Common myeloid progenitor, CD34-positive (primary cell): ENCODE measurements at regions of chr5 and their contacts with region 1.

Region 1: DNA sequence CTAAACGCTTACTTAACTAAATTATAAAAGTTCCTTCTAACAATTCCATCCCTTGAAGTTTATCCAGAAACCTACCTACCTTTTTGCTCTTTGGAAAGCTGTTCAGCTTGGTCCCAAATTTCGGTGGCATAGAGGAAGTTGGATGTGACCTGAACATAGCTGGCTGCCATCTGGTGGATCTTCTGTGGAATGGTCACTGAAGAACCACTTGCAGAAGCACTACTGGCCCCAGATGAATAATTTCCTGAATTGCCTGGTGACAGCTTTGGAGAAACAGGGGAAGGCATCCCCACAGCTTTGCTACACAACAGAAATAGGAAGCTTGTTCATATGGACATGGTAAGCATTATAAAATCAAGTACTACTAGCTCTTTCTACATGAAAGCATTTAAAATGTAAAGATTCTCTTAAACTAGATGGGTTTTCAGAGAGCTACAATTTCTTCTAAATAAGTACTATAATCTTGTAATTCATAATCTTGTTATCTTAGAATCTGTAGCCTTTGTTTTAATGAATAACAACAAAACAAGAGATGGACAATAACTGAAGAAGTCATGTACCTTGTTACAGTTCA is 9.9 kb downstream of the LEAP2 start:
- DNase-seq: peak; percentile 72 to 84 (median 83)
- H3K4me3 ChIP-seq: no peak overlapping the region
- H3K27ac ChIP-seq: no peak overlapping the region
- H3K4me1 ChIP-seq: peaks cover 0 to 3% (median 1%) of the 10 kb centered on the region in 4 experiments
- H3K27me3 ChIP-seq: no peaks in the 10 kb centered on the region

Region 2: DNA sequence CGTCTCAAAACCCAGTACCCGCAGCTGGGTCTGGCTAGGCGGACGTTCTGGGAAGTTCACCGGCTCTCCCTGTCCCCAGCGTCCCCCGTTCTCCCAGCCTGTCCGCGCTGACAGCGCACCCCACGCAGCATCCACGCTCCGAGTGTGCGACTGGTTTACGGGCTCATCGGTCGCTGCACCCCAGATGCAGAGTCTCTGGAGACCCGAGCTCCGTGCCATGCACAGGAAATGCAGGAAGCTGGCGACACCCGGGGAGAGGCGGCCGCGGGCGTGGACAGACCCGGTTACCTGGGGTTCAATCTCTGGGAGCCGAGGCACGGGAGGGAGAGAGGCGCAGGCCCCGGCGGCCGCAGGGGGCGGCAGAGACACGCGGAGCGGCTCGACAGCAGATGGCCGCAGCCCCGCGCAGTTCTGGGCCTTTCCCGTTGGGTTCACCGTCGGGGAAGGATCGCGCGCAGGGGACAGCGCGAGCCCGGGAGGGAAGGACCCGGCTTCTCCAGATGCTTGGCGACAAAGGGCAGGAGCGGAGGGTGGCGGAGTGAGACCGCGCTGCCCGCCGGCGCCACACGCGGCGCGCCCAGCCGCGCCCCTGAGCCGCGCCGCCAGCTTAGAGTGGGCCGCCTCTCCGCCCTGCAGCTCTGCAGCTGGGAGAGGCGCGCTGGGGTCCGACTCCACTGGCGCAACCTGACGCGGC is 53.5 kb before region 1 on chr5:
- CTCF ChIA-PET with region 1: interaction called, 86 read pairs
- POLR2A ChIA-PET with region 1: no interaction called
- DNase-seq: peak; percentile 60 to 78 (median 72)
- H3K4me3 ChIP-seq: peak overlapping the region; percentile 33 to 80 (median 71)
- H3K27ac ChIP-seq: no peak overlapping the region
- H3K4me1 ChIP-seq: peaks cover 0 to 27% (median 22%) of the 10 kb centered on the region in 4 experiments
- H3K27me3 ChIP-seq: peaks cover 0 to 61% (median 39%) of the 10 kb centered on the region in 5 experiments

Region 3: DNA sequence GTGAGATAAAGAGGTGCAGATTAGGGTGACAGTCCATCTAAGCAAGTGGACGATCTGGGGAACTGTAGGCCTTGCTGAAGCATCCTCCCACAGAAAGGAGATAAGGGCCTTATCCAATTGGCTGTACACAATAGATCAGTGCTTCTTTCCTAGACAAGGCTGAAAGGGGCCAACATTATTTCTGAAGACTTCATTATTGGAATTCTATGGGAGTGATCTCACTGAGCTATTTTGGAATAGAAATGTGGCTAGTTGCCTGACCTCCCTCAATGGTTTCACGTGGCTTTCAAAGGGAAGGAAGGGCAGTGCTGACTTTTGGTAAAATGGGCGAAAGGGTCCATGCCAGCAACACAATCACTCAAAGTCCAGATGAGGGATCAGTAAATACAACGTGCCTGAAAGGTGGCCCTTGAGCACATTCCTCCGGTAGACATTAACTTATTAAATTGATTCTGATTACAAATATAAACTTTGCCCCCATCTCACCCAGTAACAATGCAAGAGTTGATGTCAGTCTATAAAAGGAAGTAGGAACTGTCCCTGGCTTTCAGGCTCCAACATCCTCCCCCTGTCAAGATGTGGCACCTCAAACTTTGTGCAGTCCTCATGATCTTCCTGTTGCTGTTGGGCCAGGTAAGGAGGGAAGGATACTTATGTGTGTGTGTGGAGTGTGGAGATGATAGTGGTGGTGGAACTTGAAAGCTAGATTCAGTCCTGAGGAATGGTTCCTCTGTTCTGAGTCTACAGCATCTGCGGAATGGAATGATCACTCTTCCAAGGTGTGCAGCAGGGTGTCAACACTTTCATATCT is 10.0 kb before region 1 on chr5 and contains the start of gene LEAP2:
- CTCF ChIA-PET with region 1: interaction called, 31 read pairs
- POLR2A ChIA-PET with region 1: no interaction called
- DNase-seq: no peak
- H3K4me3 ChIP-seq: no peak within 1 kb of the TSS
- H3K27ac ChIP-seq: no peak within 1 kb of the TSS
- H3K4me1 ChIP-seq: no peaks in the 10 kb centered on the region
- H3K27me3 ChIP-seq: no peaks in the 10 kb centered on the region